B cell (primary cell): ENCODE measurements at regions of chr16 and their contacts with region 1.

Region 1: GRCh38 chr16:81831722-81832126 is 52.6 kb downstream of the PLCG2 start:
- DNase-seq: peak; percentile 88
- ATAC-seq: peak; percentile 75
- H3K4me3 ChIP-seq: peak overlapping the region; percentile 38 to 58 (median 49)
- H3K4me3 Mint-ChIP-seq: peak overlapping the region; percentile 85
- H3K27ac ChIP-seq: peak overlapping the region; percentile 73 to 77
- H3K27ac Mint-ChIP-seq: peak overlapping the region; percentile 90
- H3K4me1 ChIP-seq: peaks cover 94 to 100% of the 10 kb centered on the region in 2 donors
- H3K4me1 Mint-ChIP-seq: peaks cover 92% of the 10 kb centered on the region
- H3K27me3 ChIP-seq: no peaks in the 10 kb centered on the region
- H3K27me3 Mint-ChIP-seq: no peaks in the 10 kb centered on the region
- CTCF ChIP-seq: peak; percentile 60

Region 2: GRCh38 chr16:81730090-81731051 is 101.4 kb before region 1 on chr16:
- CTCF ChIA-PET with region 1: interaction called, 7 read pairs
- POLR2A ChIA-PET with region 1: interaction called, 14 read pairs
- intact Hi-C with region 1: no loop called
- DNase-seq: peak; percentile 77
- ATAC-seq: peak; percentile 85
- H3K4me3 ChIP-seq: peak overlapping the region in 4 of 5 experiments; percentile 44 to 61 (median 55)
- H3K4me3 Mint-ChIP-seq: peak overlapping the region; percentile 90
- H3K27ac ChIP-seq: peak overlapping the region in 1 of 2 donors; percentile 62
- H3K27ac Mint-ChIP-seq: peak overlapping the region; percentile 90
- H3K4me1 ChIP-seq: peaks cover 12 to 15% of the 10 kb centered on the region in 2 donors
- H3K4me1 Mint-ChIP-seq: peaks cover 22% of the 10 kb centered on the region
- H3K27me3 ChIP-seq: no peaks in the 10 kb centered on the region
- H3K27me3 Mint-ChIP-seq: no peaks in the 10 kb centered on the region
- CTCF ChIP-seq: peak; percentile 74

Region 3: GRCh38 chr16:81778861-81779535 is 52.7 kb before region 1 on chr16 and contains the start of gene PLCG2:
- CTCF ChIA-PET with region 1: interaction called, 9 read pairs
- POLR2A ChIA-PET with region 1: interaction called, 4 read pairs
- intact Hi-C with region 1: loop called (anchors 2 kb)
- DNase-seq: peak; percentile 91
- ATAC-seq: peak; percentile 85
- H3K4me3 ChIP-seq: peak within 1 kb of the TSS; percentile 81 to 90 (median 83)
- H3K4me3 Mint-ChIP-seq: peak within 1 kb of the TSS; percentile 99
- H3K27ac ChIP-seq: peak within 1 kb of the TSS; percentile 72 to 91
- H3K27ac Mint-ChIP-seq: peak within 1 kb of the TSS; percentile 95
- H3K4me1 ChIP-seq: peaks cover 59 to 67% of the 10 kb centered on the region in 2 donors
- H3K4me1 Mint-ChIP-seq: peaks cover 72% of the 10 kb centered on the region
- H3K27me3 ChIP-seq: no peaks in the 10 kb centered on the region
- H3K27me3 Mint-ChIP-seq: no peaks in the 10 kb centered on the region
- CTCF ChIP-seq: no peak
- total RNA-seq, gene PLCG2: 812 and 852 TPM in 2 replicates

Region 4: GRCh38 chr16:81798311-81799137 is 33.2 kb before region 1 on chr16:
- CTCF ChIA-PET with region 1: interaction called, 4 read pairs
- POLR2A ChIA-PET with region 1: interaction called, 12 read pairs
- intact Hi-C with region 1: no loop called
- DNase-seq: peak; percentile 87
- ATAC-seq: peak; percentile 80
- H3K4me3 ChIP-seq: peak overlapping the region in 3 of 5 experiments; percentile 4 to 38 (median 6)
- H3K4me3 Mint-ChIP-seq: peak overlapping the region; percentile 77
- H3K27ac ChIP-seq: peak overlapping the region; percentile 90 to 97
- H3K27ac Mint-ChIP-seq: peak overlapping the region; percentile 97
- H3K4me1 ChIP-seq: peaks cover 90 to 98% of the 10 kb centered on the region in 2 donors
- H3K4me1 Mint-ChIP-seq: peaks cover 77% of the 10 kb centered on the region
- H3K27me3 ChIP-seq: no peaks in the 10 kb centered on the region
- H3K27me3 Mint-ChIP-seq: no peaks in the 10 kb centered on the region
- CTCF ChIP-seq: no peak

Region 5: GRCh38 chr16:81817789-81818567 is 13.7 kb before region 1 on chr16:
- CTCF ChIA-PET with region 1: interaction called, 10 read pairs
- POLR2A ChIA-PET with region 1: interaction called, 11 read pairs
- intact Hi-C with region 1: loop called (anchors 1 kb)
- DNase-seq: peak; percentile 88
- ATAC-seq: peak; percentile 51
- H3K4me3 ChIP-seq: peak overlapping the region in 3 of 5 experiments; percentile 12 to 44 (median 29)
- H3K4me3 Mint-ChIP-seq: peak overlapping the region; percentile 89
- H3K27ac ChIP-seq: peak overlapping the region; percentile 94 to 98
- H3K27ac Mint-ChIP-seq: peak overlapping the region; percentile 100
- H3K4me1 ChIP-seq: peaks cover 97 to 100% of the 10 kb centered on the region in 2 donors
- H3K4me1 Mint-ChIP-seq: peaks cover 89% of the 10 kb centered on the region
- H3K27me3 ChIP-seq: no peaks in the 10 kb centered on the region
- H3K27me3 Mint-ChIP-seq: no peaks in the 10 kb centered on the region
- CTCF ChIP-seq: no peak